Activated naive CD4-positive, alpha-beta T cell treated with anti-CD3 and anti-CD28 coated beads for 36 hours (primary cell): ENCODE measurements at regions of chr2 and their contacts with region 1.

Region 1: GRCh38 chr2:98731041-98731893 is at the start of gene MGAT4A:
- DNase-seq: peak; percentile 81
- H3K4me3 Mint-ChIP-seq: peak within 1 kb of the TSS; percentile 89
- H3K27ac Mint-ChIP-seq: peak within 1 kb of the TSS; percentile 95
- H3K4me1 Mint-ChIP-seq: peaks cover 60% of the 10 kb centered on the region
- H3K27me3 Mint-ChIP-seq: no peaks in the 10 kb centered on the region
- total RNA-seq, gene MGAT4A: 85.5 to 87.5 TPM

Region 2: GRCh38 chr2:98455494-98455976 is 275.7 kb before region 1 on chr2:
- CTCF ChIA-PET with region 1: no interaction called
- intact Hi-C with region 1: loop called (anchors 5 kb)
- DNase-seq: peak; percentile 66
- H3K4me3 Mint-ChIP-seq: peak overlapping the region; percentile 59
- H3K27ac Mint-ChIP-seq: peak overlapping the region; percentile 89
- H3K4me1 Mint-ChIP-seq: peaks cover 98% of the 10 kb centered on the region
- H3K27me3 Mint-ChIP-seq: no peaks in the 10 kb centered on the region

Region 3: GRCh38 chr2:98654699-98655495 is 76.4 kb before region 1 on chr2:
- CTCF ChIA-PET with region 1: interaction called, 19 read pairs
- intact Hi-C with region 1: loop called (anchors 1 kb)
- DNase-seq: peak; percentile 53
- H3K4me3 Mint-ChIP-seq: peak overlapping the region; percentile 57
- H3K27ac Mint-ChIP-seq: peak overlapping the region; percentile 94
- H3K4me1 Mint-ChIP-seq: peaks cover 80% of the 10 kb centered on the region
- H3K27me3 Mint-ChIP-seq: no peaks in the 10 kb centered on the region

Region 4: DNA sequence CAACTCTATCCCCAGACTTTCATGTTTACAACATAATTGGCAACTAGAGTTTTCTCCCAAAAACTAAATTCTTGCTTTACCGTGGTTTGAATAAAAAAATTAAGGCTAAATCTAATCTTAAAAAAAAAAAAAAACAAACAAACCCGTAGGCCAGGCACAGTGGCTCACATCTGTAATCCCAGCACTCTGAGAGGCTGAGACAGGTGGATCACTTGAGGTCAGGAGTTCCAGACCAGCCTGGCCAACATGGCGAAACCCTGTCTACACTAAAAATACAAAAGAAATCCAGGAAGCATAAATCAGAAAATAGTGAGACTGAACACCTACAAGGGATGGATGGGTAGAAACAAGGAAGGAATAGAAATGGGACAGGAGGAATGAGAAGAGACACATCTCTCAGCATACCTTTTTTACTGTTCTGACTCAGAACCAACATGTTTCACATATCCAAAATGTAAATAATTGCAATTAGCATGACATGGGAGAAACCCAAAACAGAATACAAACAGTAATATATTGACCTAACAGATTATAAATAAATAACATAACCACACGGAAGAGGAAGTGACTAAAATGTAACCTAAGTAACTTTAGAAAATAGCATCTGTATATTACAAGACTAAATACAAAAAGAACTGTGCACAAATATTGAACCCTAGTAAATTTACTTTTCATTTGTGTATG is 17.8 kb before region 1 on chr2:
- CTCF ChIA-PET with region 1: interaction called, 6 read pairs
- intact Hi-C with region 1: loop called (anchors 1 kb)
- DNase-seq: no peak
- H3K4me3 Mint-ChIP-seq: no peak overlapping the region
- H3K27ac Mint-ChIP-seq: peak overlapping the region; percentile 12
- H3K4me1 Mint-ChIP-seq: peaks cover 94% of the 10 kb centered on the region
- H3K27me3 Mint-ChIP-seq: no peaks in the 10 kb centered on the region

Region 5: GRCh38 chr2:99066075-99066958 is 335.1 kb after region 1 on chr2:
- CTCF ChIA-PET with region 1: no interaction called
- intact Hi-C with region 1: loop called (anchors 10 kb)
- DNase-seq: peak; percentile 65
- H3K4me3 Mint-ChIP-seq: no peak overlapping the region
- H3K27ac Mint-ChIP-seq: no peak overlapping the region
- H3K4me1 Mint-ChIP-seq: peaks cover 4% of the 10 kb centered on the region
- H3K27me3 Mint-ChIP-seq: no peaks in the 10 kb centered on the region

Region 6: DNA sequence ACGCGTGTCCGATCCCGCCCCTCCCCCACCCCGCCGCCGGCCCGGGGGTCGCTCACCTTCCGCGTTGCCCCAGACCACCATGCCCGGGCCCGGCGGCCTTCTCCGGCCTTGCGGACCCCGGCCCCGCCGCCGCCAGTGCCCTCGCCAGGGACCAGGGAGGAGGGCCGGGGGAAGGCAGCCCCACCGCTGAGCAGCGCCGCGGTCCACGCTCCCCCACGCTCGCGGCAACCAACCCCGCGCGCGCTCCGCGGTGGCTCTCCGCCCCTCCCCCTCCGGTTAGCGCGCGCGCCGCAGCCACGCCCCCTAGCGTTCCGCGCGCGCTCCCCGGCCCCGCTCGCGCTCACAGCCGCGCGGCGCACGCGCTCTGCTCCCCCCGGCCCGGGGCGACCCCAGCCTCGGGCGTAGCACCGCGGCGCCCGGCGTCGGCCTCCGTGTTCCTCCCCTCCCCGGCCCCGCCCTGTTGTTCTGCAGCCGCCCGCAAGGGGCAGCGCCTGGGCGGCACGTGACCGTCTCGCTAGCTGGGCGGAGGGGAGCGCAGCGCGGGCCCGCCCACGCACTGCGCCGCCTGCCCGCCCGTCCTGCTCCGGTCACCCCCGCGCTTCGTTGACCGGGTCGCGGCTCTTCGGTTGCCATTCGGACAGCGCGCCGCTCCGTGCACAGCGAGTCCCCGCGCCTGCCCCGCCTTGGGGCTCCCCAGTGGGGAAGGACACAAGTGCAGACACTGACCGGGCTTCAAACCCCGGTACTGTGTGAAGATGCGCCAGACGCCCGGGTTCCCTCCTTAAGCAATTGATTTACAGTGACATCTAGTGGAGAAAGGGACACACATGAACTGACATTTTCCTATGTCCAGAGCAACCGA is 758.7 kb after region 1 on chr2 and contains the start of gene REV1:
- CTCF ChIA-PET with region 1: no interaction called
- intact Hi-C with region 1: loop called (anchors 10 kb)
- DNase-seq: peak; percentile 94
- H3K4me3 Mint-ChIP-seq: peak within 1 kb of the TSS; percentile 87
- H3K27ac Mint-ChIP-seq: peak within 1 kb of the TSS; percentile 92
- H3K4me1 Mint-ChIP-seq: peaks cover 37% of the 10 kb centered on the region
- H3K27me3 Mint-ChIP-seq: no peaks in the 10 kb centered on the region
- total RNA-seq, gene REV1: 29.6 to 32.3 TPM

Region 7: DNA sequence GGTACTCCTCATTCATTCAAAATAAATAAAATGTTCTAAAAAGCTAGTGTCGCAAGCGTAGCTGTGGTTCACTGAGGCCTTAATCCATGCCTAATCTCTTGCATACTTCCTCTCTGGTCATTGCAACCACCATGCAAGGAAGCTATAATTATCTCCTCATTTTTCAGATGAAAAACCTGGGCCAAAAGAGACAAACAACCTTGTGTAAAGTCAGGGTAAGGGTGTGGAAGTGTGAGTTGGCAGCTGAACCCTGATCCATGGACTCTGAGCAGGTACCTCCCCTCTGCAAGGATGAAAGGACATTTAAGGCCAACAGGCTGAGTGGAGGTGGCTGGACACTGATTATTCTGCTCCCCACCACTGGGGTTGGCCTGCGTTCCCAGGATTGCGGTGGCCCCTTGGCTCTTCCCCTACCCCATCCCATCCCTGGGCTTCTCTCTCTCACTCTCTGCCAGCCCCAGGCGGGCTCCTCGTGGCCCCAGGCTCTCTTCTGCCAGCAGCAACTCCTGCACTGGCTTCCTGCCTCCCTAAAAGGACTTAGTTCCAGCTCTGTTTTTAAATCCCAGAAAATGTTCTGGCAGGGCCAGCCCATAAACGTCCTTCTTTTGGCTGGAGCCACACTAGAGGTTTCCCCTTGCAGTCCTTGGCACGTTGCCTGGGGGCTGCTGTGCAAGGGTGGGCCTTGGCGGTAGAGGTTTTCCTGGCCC is 1483.2 kb after region 1 on chr2:
- CTCF ChIA-PET with region 1: no interaction called
- intact Hi-C with region 1: no loop called
- DNase-seq: no peak
- H3K4me3 Mint-ChIP-seq: no peak overlapping the region
- H3K27ac Mint-ChIP-seq: no peak overlapping the region
- H3K4me1 Mint-ChIP-seq: no peaks in the 10 kb centered on the region
- H3K27me3 Mint-ChIP-seq: no peaks in the 10 kb centered on the region